CD8-positive, alpha-beta T cell (primary cell): ENCODE measurements at regions of chr10 and their contacts with region 1.

Region 1: DNA sequence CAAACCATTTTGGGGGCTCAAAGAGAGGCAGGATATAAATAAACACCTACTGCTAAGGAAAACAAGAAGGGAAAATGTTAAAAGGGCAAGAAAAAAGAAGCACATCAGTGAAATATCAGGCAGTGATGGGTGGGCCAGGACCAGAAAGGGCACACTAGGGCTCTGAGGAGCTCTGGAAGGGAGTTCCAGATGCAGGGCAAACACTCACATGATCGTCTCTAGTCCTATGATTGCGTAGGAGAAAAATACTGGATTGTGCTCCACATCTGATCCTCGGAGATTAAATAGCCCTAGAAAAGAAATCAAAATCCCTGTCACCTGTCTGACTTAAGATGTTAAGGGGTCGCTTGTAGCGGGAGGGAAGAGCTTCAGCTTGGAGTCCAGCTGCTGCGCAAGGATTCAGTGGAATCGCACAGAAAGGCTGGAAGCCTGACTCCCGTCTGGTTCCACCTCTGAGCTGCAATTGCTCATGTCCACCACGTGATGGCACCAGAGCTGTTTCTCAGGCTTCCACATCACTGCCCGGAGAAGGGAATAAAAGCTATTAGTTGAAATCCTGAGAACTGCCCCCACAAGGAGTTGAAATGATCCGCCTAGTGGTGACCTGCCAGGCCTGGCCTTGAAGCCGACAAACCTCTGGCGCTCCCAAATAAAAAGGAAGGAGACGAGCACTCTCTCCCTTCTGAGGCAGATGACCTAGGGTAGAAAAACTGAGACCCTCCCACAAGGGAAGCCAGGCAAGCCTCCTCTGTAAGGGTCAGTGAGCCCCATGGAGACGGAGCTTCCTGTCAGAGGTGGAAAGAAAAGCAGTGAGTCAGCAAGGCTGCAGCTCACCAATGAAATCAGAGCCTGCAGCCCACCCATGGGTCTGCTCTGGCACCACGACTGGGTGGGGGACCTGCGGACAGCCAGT is 39.2 kb downstream of the XPNPEP1 start:
- DNase-seq: peak; percentile 22 to 80 (median 63)
- ATAC-seq: peak; percentile 94
- H3K4me3 ChIP-seq: no peak overlapping the region
- H3K4me3 Mint-ChIP-seq: no peak overlapping the region
- H3K27ac ChIP-seq: no peak overlapping the region
- H3K27ac Mint-ChIP-seq: no peak overlapping the region
- H3K4me1 ChIP-seq: no peaks in the 10 kb centered on the region
- H3K4me1 Mint-ChIP-seq: peaks cover 4% of the 10 kb centered on the region
- H3K27me3 ChIP-seq: no peaks in the 10 kb centered on the region
- H3K27me3 Mint-ChIP-seq: no peaks in the 10 kb centered on the region
- CTCF ChIP-seq: peak; percentile 99

Region 2: DNA sequence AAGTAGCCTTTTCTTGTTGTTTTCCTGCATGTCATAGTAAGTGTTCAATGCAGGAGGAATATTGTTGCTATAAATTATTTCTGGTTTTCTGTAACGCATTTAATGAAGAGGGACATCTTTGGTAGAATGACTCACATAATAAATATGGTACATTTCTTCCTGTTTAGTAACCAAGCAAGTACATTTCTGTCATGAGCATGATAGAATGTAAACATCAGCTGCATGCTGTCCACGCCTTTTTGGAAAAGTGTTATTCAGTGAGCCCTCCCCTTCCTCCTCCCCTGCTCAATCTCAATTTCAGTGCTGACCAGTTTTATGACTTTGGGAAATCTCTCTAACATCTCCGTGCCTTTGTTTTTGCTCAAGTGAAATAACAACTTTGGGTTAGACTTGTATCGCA is 624.8 kb before region 1 on chr10:
- CTCF ChIA-PET with region 1: no interaction called
- POLR2A ChIA-PET with region 1: no interaction called
- intact Hi-C with region 1: no loop called
- DNase-seq: no peak
- ATAC-seq: no peak
- H3K4me3 ChIP-seq: no peak overlapping the region
- H3K4me3 Mint-ChIP-seq: no peak overlapping the region
- H3K27ac ChIP-seq: no peak overlapping the region
- H3K27ac Mint-ChIP-seq: no peak overlapping the region
- H3K4me1 ChIP-seq: no peaks in the 10 kb centered on the region
- H3K4me1 Mint-ChIP-seq: no peaks in the 10 kb centered on the region
- H3K27me3 ChIP-seq: no peaks in the 10 kb centered on the region
- H3K27me3 Mint-ChIP-seq: no peaks in the 10 kb centered on the region
- CTCF ChIP-seq: no peak

Region 3: GRCh38 chr10:109624939-109625338 is 259.2 kb before region 1 on chr10:
- CTCF ChIA-PET with region 1: no interaction called
- POLR2A ChIA-PET with region 1: no interaction called
- intact Hi-C with region 1: no loop called
- DNase-seq: no peak
- ATAC-seq: no peak
- H3K4me3 ChIP-seq: no peak overlapping the region
- H3K4me3 Mint-ChIP-seq: no peak overlapping the region
- H3K27ac ChIP-seq: no peak overlapping the region
- H3K27ac Mint-ChIP-seq: no peak overlapping the region
- H3K4me1 ChIP-seq: no peaks in the 10 kb centered on the region
- H3K4me1 Mint-ChIP-seq: no peaks in the 10 kb centered on the region
- H3K27me3 ChIP-seq: no peaks in the 10 kb centered on the region
- H3K27me3 Mint-ChIP-seq: no peaks in the 10 kb centered on the region
- CTCF ChIP-seq: no peak

Region 4: GRCh38 chr10:109640935-109641334 is 243.2 kb before region 1 on chr10:
- CTCF ChIA-PET with region 1: no interaction called
- POLR2A ChIA-PET with region 1: no interaction called
- intact Hi-C with region 1: no loop called
- DNase-seq: no peak
- ATAC-seq: no peak
- H3K4me3 ChIP-seq: no peak overlapping the region
- H3K4me3 Mint-ChIP-seq: no peak overlapping the region
- H3K27ac ChIP-seq: no peak overlapping the region
- H3K27ac Mint-ChIP-seq: no peak overlapping the region
- H3K4me1 ChIP-seq: no peaks in the 10 kb centered on the region
- H3K4me1 Mint-ChIP-seq: no peaks in the 10 kb centered on the region
- H3K27me3 ChIP-seq: no peaks in the 10 kb centered on the region
- H3K27me3 Mint-ChIP-seq: no peaks in the 10 kb centered on the region
- CTCF ChIP-seq: no peak

Region 5: GRCh38 chr10:109902934-109903589 is 18.9 kb after region 1 on chr10:
- CTCF ChIA-PET with region 1: interaction called, 33 read pairs
- POLR2A ChIA-PET with region 1: no interaction called
- intact Hi-C with region 1: no loop called
- DNase-seq: peak in 1 of 9 experiments; percentile 48
- ATAC-seq: peak; percentile 79
- H3K4me3 ChIP-seq: peak overlapping the region in 1 of 2 experiments; percentile 12
- H3K4me3 Mint-ChIP-seq: peak overlapping the region; percentile 64
- H3K27ac ChIP-seq: peak overlapping the region in 1 of 2 experiments; percentile 80
- H3K27ac Mint-ChIP-seq: peak overlapping the region; percentile 82
- H3K4me1 ChIP-seq: peaks cover 13% of the 10 kb centered on the region
- H3K4me1 Mint-ChIP-seq: peaks cover 55% of the 10 kb centered on the region
- H3K27me3 ChIP-seq: no peaks in the 10 kb centered on the region
- H3K27me3 Mint-ChIP-seq: no peaks in the 10 kb centered on the region
- CTCF ChIP-seq: no peak

Region 6: GRCh38 chr10:109922976-109923921 is 39.1 kb after region 1 on chr10 and contains the start of gene XPNPEP1:
- CTCF ChIA-PET with region 1: interaction called, 7 read pairs
- POLR2A ChIA-PET with region 1: interaction called, 3 read pairs
- intact Hi-C with region 1: loop called (anchors 5 kb)
- DNase-seq: peak; percentile 55 to 93 (median 78)
- ATAC-seq: peak; percentile 90
- H3K4me3 ChIP-seq: peak within 1 kb of the TSS; percentile 75 to 80
- H3K4me3 Mint-ChIP-seq: peak within 1 kb of the TSS; percentile 87
- H3K27ac ChIP-seq: peak within 1 kb of the TSS; percentile 76 to 91
- H3K27ac Mint-ChIP-seq: peak within 1 kb of the TSS; percentile 92
- H3K4me1 ChIP-seq: peaks cover 37% of the 10 kb centered on the region
- H3K4me1 Mint-ChIP-seq: peaks cover 52% of the 10 kb centered on the region
- H3K27me3 ChIP-seq: no peaks in the 10 kb centered on the region
- H3K27me3 Mint-ChIP-seq: no peaks in the 10 kb centered on the region
- CTCF ChIP-seq: no peak
- total RNA-seq, gene XPNPEP1: 50.4 to 54.7 TPM

Region 7: GRCh38 chr10:109978481-109978880 is 94.4 kb after region 1 on chr10:
- CTCF ChIA-PET with region 1: interaction called, 24 read pairs
- POLR2A ChIA-PET with region 1: no interaction called
- intact Hi-C with region 1: loop called (anchors 1 kb)
- DNase-seq: peak; percentile 31 to 75 (median 71)
- ATAC-seq: peak; percentile 70
- H3K4me3 ChIP-seq: no peak overlapping the region
- H3K4me3 Mint-ChIP-seq: no peak overlapping the region
- H3K27ac ChIP-seq: no peak overlapping the region
- H3K27ac Mint-ChIP-seq: no peak overlapping the region
- H3K4me1 ChIP-seq: peaks cover 7% of the 10 kb centered on the region
- H3K4me1 Mint-ChIP-seq: peaks cover 16% of the 10 kb centered on the region
- H3K27me3 ChIP-seq: no peaks in the 10 kb centered on the region
- H3K27me3 Mint-ChIP-seq: no peaks in the 10 kb centered on the region
- CTCF ChIP-seq: peak; percentile 91

Region 8: GRCh38 chr10:110036640-110037039 is 152.5 kb after region 1 on chr10:
- CTCF ChIA-PET with region 1: interaction called, 8 read pairs
- POLR2A ChIA-PET with region 1: no interaction called
- intact Hi-C with region 1: loop called in 1 of 2 experiments (anchors 5 kb)
- DNase-seq: no peak
- ATAC-seq: no peak
- H3K4me3 ChIP-seq: no peak overlapping the region
- H3K4me3 Mint-ChIP-seq: no peak overlapping the region
- H3K27ac ChIP-seq: no peak overlapping the region
- H3K27ac Mint-ChIP-seq: peak overlapping the region; percentile 82
- H3K4me1 ChIP-seq: peaks cover 78% of the 10 kb centered on the region
- H3K4me1 Mint-ChIP-seq: peaks cover 90% of the 10 kb centered on the region
- H3K27me3 ChIP-seq: no peaks in the 10 kb centered on the region
- H3K27me3 Mint-ChIP-seq: no peaks in the 10 kb centered on the region
- CTCF ChIP-seq: no peak

Region 9: DNA sequence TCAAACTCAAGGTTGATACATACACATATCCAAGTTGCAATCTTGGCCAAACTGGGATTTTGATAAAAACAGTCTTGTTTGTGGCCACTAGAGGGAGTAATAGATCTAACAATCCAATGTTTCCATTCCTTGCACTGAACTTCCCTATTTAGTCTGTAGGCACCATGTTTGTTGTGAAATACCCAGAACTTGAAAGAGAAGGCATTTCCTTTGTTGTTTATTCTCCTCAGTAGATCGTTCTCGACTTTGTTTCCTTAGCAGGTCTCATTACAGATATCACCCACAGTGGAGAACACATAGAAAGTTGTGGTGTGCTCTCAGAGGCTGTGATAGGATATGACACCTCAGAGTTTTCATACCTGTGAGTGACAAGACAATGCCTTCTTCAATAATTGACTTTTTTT is 253.0 kb after region 1 on chr10:
- CTCF ChIA-PET with region 1: interaction called, 24 read pairs
- POLR2A ChIA-PET with region 1: no interaction called
- intact Hi-C with region 1: loop called (anchors 1 to 5 kb)
- DNase-seq: peak in 2 of 9 experiments; percentile 67 to 79
- ATAC-seq: peak; percentile 74
- H3K4me3 ChIP-seq: no peak overlapping the region
- H3K4me3 Mint-ChIP-seq: no peak overlapping the region
- H3K27ac ChIP-seq: peak overlapping the region in 1 of 2 experiments; percentile 2
- H3K27ac Mint-ChIP-seq: peak overlapping the region; percentile 23
- H3K4me1 ChIP-seq: peaks cover 9% of the 10 kb centered on the region
- H3K4me1 Mint-ChIP-seq: peaks cover 21% of the 10 kb centered on the region
- H3K27me3 ChIP-seq: no peaks in the 10 kb centered on the region
- H3K27me3 Mint-ChIP-seq: no peaks in the 10 kb centered on the region
- CTCF ChIP-seq: peak; percentile 97

Region 10: DNA sequence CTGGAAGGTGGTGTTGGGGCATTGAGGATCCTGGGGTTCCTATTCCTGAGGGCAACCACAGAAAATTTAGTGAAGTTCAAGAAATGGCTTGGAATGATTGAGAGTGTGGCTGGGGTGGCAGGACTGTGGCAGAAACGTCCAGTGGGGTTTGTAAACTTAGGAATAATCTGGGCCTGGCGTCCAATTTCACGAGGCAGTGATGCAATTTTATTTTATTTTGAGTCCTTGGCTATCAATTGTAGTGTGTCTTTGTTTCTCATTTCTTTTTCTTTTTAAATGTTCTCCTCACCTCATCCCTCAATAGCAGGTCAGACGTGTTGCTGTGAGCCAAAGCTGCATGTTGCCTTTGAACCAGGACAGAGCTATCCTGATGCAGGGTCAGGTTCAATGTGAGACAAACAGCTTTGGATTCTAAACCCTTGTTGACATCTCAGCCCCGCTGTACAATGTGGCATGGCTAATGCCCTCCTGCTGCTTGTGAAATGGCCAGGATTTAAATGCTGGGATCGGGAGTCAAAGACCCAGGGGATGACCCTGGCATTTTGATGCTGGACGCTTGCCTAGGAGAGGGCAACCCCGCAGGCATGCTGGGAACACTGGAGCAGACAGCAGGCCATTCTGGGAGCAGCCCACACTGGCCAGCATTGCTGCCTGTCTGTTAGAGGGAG is 824.8 kb after region 1 on chr10:
- CTCF ChIA-PET with region 1: no interaction called
- POLR2A ChIA-PET with region 1: no interaction called
- intact Hi-C with region 1: no loop called
- DNase-seq: peak in 1 of 9 experiments; percentile 25
- ATAC-seq: no peak
- H3K4me3 ChIP-seq: no peak overlapping the region
- H3K4me3 Mint-ChIP-seq: no peak overlapping the region
- H3K27ac ChIP-seq: no peak overlapping the region
- H3K27ac Mint-ChIP-seq: no peak overlapping the region
- H3K4me1 ChIP-seq: no peaks in the 10 kb centered on the region
- H3K4me1 Mint-ChIP-seq: no peaks in the 10 kb centered on the region
- H3K27me3 ChIP-seq: no peaks in the 10 kb centered on the region
- H3K27me3 Mint-ChIP-seq: peaks cover 2% of the 10 kb centered on the region
- CTCF ChIP-seq: no peak